HCT116 (cell line): ENCODE measurements at regions of chr2 and their contacts with region 1.

Region 1: DNA sequence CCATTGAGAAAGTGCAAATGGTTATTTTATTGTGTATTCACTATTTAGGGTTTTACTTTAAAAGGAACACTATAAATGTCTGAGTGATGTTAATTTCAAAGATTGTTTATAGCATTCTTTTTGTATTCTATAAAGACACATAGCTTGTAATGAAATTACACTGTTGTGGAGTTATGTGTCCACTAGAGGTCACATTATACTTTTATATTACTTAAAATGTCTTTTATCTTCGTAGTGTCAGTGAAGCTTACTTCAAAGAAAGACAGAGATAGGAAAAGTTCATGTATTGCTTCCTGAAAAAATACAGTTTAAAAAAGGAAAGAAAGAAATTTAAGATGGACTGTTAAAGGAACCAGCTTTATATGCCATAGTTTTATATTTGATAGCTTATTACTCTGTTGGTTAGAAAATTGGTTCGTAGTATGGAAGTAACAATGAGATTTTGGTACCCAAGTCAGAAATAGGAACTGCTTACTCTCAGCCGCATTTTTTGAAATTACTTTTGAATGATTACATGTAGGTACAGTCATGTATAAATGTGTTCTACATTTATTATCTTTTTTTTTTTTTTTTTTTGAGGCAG is 20.5 kb downstream of the APLF start:
- DNase-seq: no peak
- ATAC-seq: peak; percentile 54; the same call in 1 of the 2 replicates
- H3K4me3 ChIP-seq: no peak overlapping the region
- H3K27ac ChIP-seq: no peak overlapping the region
- H3K4me1 ChIP-seq: peaks cover 6 to 8% of the 10 kb centered on the region in 2 experiments; a peak in 3 of 4 replicates
- H3K27me3 ChIP-seq: no peaks in the 10 kb centered on the region
- CTCF ChIP-seq: peak; percentile 35 to 67 (median 38); a peak in 5 of 6 replicates
- POLR2A ChIP-seq: no peak
- RAD21 ChIP-seq: peak; percentile 61

Region 2: GRCh38 chr2:68500649-68501048 is 12.8 kb after region 1 on chr2:
- CTCF ChIA-PET with region 1: interaction called, 12 read pairs
- POLR2A ChIA-PET with region 1: no interaction called
- RAD21 ChIA-PET with region 1: no interaction called
- intact Hi-C with region 1: no loop called
- DNase-seq: no peak
- ATAC-seq: no peak
- H3K4me3 ChIP-seq: no peak overlapping the region
- H3K27ac ChIP-seq: no peak overlapping the region
- H3K4me1 ChIP-seq: no peaks in the 10 kb centered on the region
- H3K27me3 ChIP-seq: no peaks in the 10 kb centered on the region
- CTCF ChIP-seq: no peak
- POLR2A ChIP-seq: no peak
- RAD21 ChIP-seq: no peak

Region 3: GRCh38 chr2:68594674-68595492 is 107.0 kb after region 1 on chr2:
- CTCF ChIA-PET with region 1: interaction called, 26 read pairs
- POLR2A ChIA-PET with region 1: no interaction called
- RAD21 ChIA-PET with region 1: interaction called, 5 to 7 read pairs
- intact Hi-C with region 1: no loop called
- DNase-seq: peak; percentile 31
- ATAC-seq: peak; percentile 87
- H3K4me3 ChIP-seq: no peak overlapping the region
- H3K27ac ChIP-seq: no peak overlapping the region
- H3K4me1 ChIP-seq: no peaks in the 10 kb centered on the region; a peak in 1 of 4 replicates
- H3K27me3 ChIP-seq: no peaks in the 10 kb centered on the region
- CTCF ChIP-seq: peak; percentile 41 to 91 (median 88); a peak in 5 of 6 replicates
- POLR2A ChIP-seq: no peak
- RAD21 ChIP-seq: peak; percentile 41

Region 4: GRCh38 chr2:68646302-68646701 is 158.4 kb after region 1 on chr2:
- CTCF ChIA-PET with region 1: interaction called, 13 read pairs
- POLR2A ChIA-PET with region 1: no interaction called
- RAD21 ChIA-PET with region 1: no interaction called
- intact Hi-C with region 1: no loop called
- DNase-seq: peak; percentile 1
- ATAC-seq: peak; percentile 53; the same call in 1 of the 2 replicates
- H3K4me3 ChIP-seq: no peak overlapping the region
- H3K27ac ChIP-seq: no peak overlapping the region
- H3K4me1 ChIP-seq: no peaks in the 10 kb centered on the region
- H3K27me3 ChIP-seq: peaks cover 17% of the 10 kb centered on the region; the same call in 1 of the 2 replicates
- CTCF ChIP-seq: peak in 2 of 3 experiments; percentile 13 to 21; a peak in 2 of 6 replicates
- POLR2A ChIP-seq: no peak
- RAD21 ChIP-seq: peak; percentile 28; the same call in 1 of the 2 replicates

Region 5: GRCh38 chr2:68709421-68709911 is 221.6 kb after region 1 on chr2:
- CTCF ChIA-PET with region 1: interaction called, 21 read pairs
- POLR2A ChIA-PET with region 1: no interaction called
- RAD21 ChIA-PET with region 1: interaction called, 3 to 4 read pairs
- intact Hi-C with region 1: no loop called
- DNase-seq: peak; percentile 45
- ATAC-seq: peak; percentile 98
- H3K4me3 ChIP-seq: no peak overlapping the region
- H3K27ac ChIP-seq: no peak overlapping the region
- H3K4me1 ChIP-seq: no peaks in the 10 kb centered on the region
- H3K27me3 ChIP-seq: no peaks in the 10 kb centered on the region
- CTCF ChIP-seq: peak; percentile 63 to 78 (median 77)
- POLR2A ChIP-seq: no peak
- RAD21 ChIP-seq: peak; percentile 77

Region 6: GRCh38 chr2:68715353-68716041 is 227.6 kb after region 1 on chr2:
- CTCF ChIA-PET with region 1: interaction called, 21 read pairs
- POLR2A ChIA-PET with region 1: no interaction called
- RAD21 ChIA-PET with region 1: interaction called in 1 of 2 experiments, 3 read pairs
- intact Hi-C with region 1: loop called (anchors 5 kb)
- DNase-seq: peak; percentile 62
- ATAC-seq: peak; percentile 99
- H3K4me3 ChIP-seq: no peak overlapping the region
- H3K27ac ChIP-seq: no peak overlapping the region
- H3K4me1 ChIP-seq: no peaks in the 10 kb centered on the region
- H3K27me3 ChIP-seq: peaks cover 16% of the 10 kb centered on the region
- CTCF ChIP-seq: peak; percentile 50 to 89 (median 79); a peak in 5 of 6 replicates
- POLR2A ChIP-seq: no peak
- RAD21 ChIP-seq: peak; percentile 61

Region 7: DNA sequence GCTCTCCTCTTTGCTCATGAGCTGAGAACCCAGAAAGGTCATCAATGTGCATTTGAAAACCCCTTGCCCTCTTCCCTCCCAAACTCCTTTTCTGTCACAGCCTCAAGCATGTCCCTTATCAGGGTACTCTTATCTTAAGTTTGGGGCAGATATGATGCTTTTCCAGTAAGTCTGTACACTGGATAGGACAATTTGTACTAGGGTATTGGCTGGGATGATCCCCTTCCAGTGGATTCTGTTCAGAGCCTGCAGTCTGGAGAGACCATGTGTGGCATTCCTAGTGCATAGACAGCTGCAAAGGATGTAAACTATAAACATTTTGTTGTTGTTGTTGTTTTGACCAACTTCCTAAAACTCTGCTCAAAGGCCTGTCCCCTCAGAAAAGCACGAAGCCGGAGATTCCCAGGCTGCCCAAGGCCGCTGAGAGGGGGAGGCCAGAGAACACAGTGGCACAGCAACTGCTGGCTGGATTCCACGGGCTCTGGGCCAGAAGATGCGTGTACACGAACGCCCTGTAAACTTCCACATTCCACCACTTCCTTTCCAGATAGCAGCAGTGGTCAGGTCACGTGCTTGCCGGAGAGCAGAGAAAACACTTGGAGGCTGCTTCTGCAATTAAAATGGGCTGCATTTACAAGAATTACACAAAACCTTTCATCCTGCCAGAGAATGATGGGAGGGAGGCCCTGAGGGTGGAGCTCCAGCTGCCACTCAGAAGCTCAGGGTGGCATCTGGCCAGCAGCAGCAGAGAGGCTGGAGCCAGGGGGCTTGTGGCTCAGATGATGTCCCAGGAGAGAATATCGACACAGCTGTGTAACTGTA is 341.2 kb after region 1 on chr2:
- CTCF ChIA-PET with region 1: no interaction called
- POLR2A ChIA-PET with region 1: no interaction called
- RAD21 ChIA-PET with region 1: no interaction called
- intact Hi-C with region 1: no loop called
- DNase-seq: peak; percentile 6
- ATAC-seq: peak; percentile 76
- H3K4me3 ChIP-seq: no peak overlapping the region
- H3K27ac ChIP-seq: no peak overlapping the region
- H3K4me1 ChIP-seq: peaks cover 6 to 19% of the 10 kb centered on the region in 2 experiments; a peak in 2 of 4 replicates
- H3K27me3 ChIP-seq: no peaks in the 10 kb centered on the region
- CTCF ChIP-seq: no peak
- POLR2A ChIP-seq: no peak
- RAD21 ChIP-seq: no peak

Region 8: DNA sequence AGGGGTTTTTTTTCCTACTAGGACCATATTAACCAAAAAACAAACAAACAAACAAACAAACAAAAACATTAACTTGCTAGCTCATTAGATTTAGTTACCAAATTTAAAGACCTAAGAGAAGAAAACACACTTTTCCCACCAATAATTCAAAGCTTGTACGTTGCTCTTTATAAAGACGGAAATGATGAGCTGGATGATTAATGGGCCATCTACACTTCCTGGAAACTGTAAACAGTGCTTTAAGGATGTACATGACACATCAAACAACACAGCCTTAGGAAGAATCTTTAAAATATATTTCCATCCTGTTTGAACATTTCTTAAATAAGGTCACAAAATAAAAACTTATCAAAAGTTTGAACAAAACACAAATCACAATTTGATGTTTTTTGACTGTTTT is 382.4 kb after region 1 on chr2:
- CTCF ChIA-PET with region 1: no interaction called
- POLR2A ChIA-PET with region 1: no interaction called
- RAD21 ChIA-PET with region 1: no interaction called
- intact Hi-C with region 1: no loop called
- DNase-seq: no peak
- ATAC-seq: no peak
- H3K4me3 ChIP-seq: no peak overlapping the region
- H3K27ac ChIP-seq: no peak overlapping the region
- H3K4me1 ChIP-seq: no peaks in the 10 kb centered on the region
- H3K27me3 ChIP-seq: no peaks in the 10 kb centered on the region; the same call in 1 of the 2 replicates
- CTCF ChIP-seq: no peak
- POLR2A ChIP-seq: no peak
- RAD21 ChIP-seq: no peak